Dorsolateral prefrontal cortex (tissue), 120 donors: ENCODE measurements at regions of chr12 and their contacts with region 1.

Region 1: GRCh38 chr12:24561882-24562760 is 386.8 kb downstream of the BCAT1 start:
- DNase-seq: peak in 6 of 10 donors; percentile 34 to 74 (median 65)
- H3K4me3 ChIP-seq: peak overlapping the region; percentile 55 to 91 (median 79)
- H3K27ac ChIP-seq: peak overlapping the region in 58 of 59 donors; percentile 68 to 95 (median 88)
- H3K27me3 ChIP-seq: no peaks in the 10 kb centered on the region
- CTCF ChIP-seq: no peak

Region 2: DNA sequence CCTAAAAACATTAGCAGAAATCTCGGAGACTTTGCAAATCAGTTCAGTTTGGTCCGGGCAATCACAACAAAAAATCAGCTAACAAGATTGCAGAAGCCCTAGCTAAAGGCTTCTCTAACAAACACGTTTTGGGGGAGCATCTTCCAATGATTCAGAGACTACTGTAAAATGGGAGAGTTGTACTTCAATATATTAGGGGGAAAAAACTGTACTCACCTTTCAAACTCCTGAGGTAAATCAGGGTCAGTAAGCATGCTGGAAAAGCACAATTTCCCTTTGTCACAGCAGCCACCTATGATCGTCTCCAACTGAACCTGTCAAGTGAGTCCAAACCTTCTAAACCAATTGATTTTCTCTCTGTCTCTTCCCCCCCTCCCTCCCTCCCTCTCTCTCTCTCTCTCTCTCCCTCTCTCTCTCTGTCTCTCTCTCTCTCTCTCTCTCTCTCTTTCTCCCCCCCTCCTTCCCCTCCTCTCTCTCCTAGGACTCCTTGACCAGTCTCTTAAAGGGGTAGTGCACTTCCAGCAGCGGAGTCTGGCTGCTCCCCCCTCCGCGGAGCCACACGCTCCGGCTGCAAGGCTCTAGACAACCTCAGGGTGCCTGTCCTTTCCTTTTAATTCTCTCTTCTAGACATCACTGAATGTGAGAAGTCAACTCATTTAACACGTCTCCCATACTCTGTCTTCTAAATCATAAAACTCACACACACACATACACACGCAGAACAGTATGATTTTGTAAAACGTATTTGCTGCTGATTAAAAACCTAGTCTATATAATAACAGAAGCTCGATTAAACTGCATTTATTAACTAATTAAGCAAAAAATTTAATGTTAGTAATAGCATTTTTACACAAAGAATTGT is 612.5 kb before region 1 on chr12 and contains the start of gene SOX5:
- intact Hi-C with region 1: loop called in 1 of 2 experiments (anchors 10 kb)
- DNase-seq: peak in 6 of 10 donors; percentile 10 to 55 (median 48)
- H3K4me3 ChIP-seq: peak within 1 kb of the TSS; percentile 31 to 71 (median 52)
- H3K27ac ChIP-seq: peak within 1 kb of the TSS in 24 of 59 donors; percentile 5 to 65 (median 36)
- H3K27me3 ChIP-seq: peaks cover 0 to 47% (median 9%) of the 10 kb centered on the region in 45 donors
- CTCF ChIP-seq: no peak
- total RNA-seq, gene SOX5: 34.5 to 126 (median 65.9) TPM

Region 3: DNA sequence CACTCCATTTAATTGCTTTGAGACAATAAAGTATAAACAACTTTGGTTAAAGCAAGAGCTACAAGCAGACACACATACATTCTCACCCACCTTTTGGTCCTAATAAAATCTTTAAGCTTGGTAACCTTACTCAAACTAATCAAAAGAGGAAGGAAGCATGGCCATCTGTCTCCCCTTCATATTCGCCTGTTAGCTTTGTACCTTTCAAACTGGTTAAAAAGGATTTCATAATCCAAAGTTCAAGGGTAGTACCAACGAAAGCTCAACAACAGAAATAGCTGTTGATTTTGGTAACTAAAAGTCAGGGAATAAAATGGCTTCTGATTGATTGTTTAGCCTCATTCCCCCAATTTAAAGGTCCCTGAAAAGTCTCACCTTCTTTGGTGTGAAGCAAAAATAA is 70.2 kb before region 1 on chr12:
- intact Hi-C with region 1: loop called in 1 of 2 experiments (anchors 2 kb)
- DNase-seq: no peak
- H3K4me3 ChIP-seq: no peak overlapping the region
- H3K27ac ChIP-seq: peak overlapping the region in 1 of 59 donors; percentile 8
- H3K27me3 ChIP-seq: no peaks in the 10 kb centered on the region
- CTCF ChIP-seq: no peak